ENCODE measurements at regions of chr4 and their contacts with region 1.

Region 1: GRCh38 chr4:39697740-39698423 is at the start of gene UBE2K:
- DNase-seq: peak; percentile 87
- ATAC-seq: peak; percentile 92
- H3K4me3 Mint-ChIP-seq: peak within 1 kb of the TSS; percentile 99
- H3K27ac Mint-ChIP-seq: peak within 1 kb of the TSS; percentile 99
- H3K4me1 Mint-ChIP-seq: peaks cover 27% of the 10 kb centered on the region
- H3K27me3 Mint-ChIP-seq: no peaks in the 10 kb centered on the region
- CTCF ChIP-seq: no peak
- total RNA-seq, gene UBE2K: 131 to 138 TPM (median 135 TPM) in 3 replicates

Region 2: DNA sequence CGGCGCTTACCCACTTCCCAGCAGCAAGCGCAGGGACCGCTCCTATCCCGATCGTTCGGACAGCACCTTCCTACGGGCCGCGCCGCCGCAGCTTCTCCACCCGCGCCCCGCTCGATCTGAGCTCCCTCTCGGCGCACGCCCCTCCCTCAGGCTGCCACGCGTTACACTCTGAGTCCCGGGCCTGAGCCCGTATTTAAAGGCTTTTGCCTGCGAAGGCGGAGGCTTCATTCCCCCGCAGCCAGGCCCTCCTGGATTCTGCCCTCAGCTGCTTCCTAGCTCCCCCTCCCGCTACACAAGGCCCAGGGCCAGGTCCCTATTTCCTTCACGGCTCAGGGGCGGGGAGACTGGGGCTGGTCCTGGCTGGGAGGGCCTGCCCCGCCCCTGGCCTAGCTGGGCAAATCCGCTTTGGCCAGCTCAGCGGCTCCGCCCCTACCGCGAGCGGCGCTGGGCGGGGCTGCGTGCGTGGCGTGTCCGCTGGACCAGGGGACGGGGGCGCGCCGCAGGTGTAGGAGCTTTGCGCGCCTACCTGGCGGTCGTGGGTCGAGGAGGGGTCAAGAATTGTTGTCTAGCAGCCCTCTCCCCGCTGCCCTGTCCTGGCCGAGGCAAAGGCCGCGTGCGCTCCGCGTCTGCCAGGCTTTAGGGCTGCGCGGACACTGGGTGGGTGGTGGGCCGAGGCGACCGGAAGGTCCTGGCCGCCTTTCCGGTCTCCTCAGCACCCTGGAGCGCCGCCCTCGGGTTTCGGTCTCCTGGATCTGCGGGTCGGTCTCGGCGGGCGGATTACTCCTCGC is 170.4 kb before region 1 on chr4 and contains the start of gene UGDH:
- CTCF ChIA-PET with region 1: interaction called, 6 read pairs
- POLR2A ChIA-PET with region 1: interaction called, 12 read pairs
- DNase-seq: peak; percentile 96
- ATAC-seq: peak; percentile 97
- H3K4me3 Mint-ChIP-seq: peak within 1 kb of the TSS; percentile 99
- H3K27ac Mint-ChIP-seq: peak within 1 kb of the TSS; percentile 99
- H3K4me1 Mint-ChIP-seq: peaks cover 22% of the 10 kb centered on the region
- H3K27me3 Mint-ChIP-seq: peaks cover 9% of the 10 kb centered on the region
- CTCF ChIP-seq: no peak
- total RNA-seq, gene UGDH: 80.2 to 97.5 TPM (median 89.0 TPM) in 3 replicates

Measured in WTC11 (cell line).